Activated CD8-positive, alpha-beta T cell treated with anti-CD3 and anti-CD28 coated beads, Interleukin-2, amount 10 ng/mL, durations not matched to agents 7 days and 5 days (primary cell): ENCODE measurements at regions of chr11 and their contacts with region 1.

Region 1: GRCh38 chr11:118907051-118908042 is 18.4 kb downstream of the BCL9L start:
- DNase-seq: peak; percentile 91
- ATAC-seq: peak; percentile 74
- H3K4me3 Mint-ChIP-seq: no peak overlapping the region
- H3K27ac Mint-ChIP-seq: peak overlapping the region; percentile 42
- H3K4me1 Mint-ChIP-seq: peaks cover 47% of the 10 kb centered on the region
- H3K27me3 Mint-ChIP-seq: no peaks in the 10 kb centered on the region

Region 2: GRCh38 chr11:118917481-118918127 is 10.3 kb after region 1 on chr11:
- CTCF ChIA-PET with region 1: interaction called, 3 read pairs
- POLR2A ChIA-PET with region 1: interaction called, 104 read pairs
- DNase-seq: peak; percentile 70
- ATAC-seq: peak; percentile 17
- H3K4me3 Mint-ChIP-seq: peak overlapping the region; percentile 80
- H3K27ac Mint-ChIP-seq: peak overlapping the region; percentile 96
- H3K4me1 Mint-ChIP-seq: peaks cover 88% of the 10 kb centered on the region
- H3K27me3 Mint-ChIP-seq: no peaks in the 10 kb centered on the region

Region 3: DNA sequence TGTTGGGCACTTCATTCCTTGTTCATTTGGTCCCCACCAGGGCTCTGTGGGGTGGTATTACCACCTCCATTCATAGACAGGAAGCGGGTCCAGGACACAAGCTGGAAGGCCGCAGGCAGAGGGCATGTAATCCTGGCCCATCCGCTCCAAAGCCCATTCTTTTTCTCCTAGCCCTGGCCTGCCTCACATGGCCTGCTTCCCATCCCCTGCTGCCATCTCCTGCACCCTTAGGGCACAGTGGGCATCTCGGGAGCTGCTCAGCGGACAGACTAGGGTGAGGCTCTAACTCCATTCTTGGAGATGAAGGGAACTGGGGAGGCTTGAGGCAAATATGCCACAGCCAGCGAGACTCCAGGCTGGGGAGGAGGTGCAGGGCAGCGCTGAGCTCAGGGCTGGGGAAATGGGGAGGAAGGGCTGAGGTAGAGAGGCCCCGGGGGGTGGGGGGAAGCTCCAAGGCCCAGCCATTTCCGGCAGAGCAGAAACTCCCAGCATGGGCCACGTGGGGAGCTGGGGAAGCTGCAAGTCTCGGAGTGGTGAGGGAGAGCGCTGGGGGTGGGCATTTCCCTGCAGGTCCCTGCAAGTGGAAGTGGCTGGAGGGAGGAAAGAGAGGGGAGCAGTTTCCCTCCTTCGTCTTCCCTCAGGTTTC is 32.7 kb after region 1 on chr11:
- CTCF ChIA-PET with region 1: interaction called, 10 read pairs
- POLR2A ChIA-PET with region 1: interaction called, 4 read pairs
- DNase-seq: peak; percentile 76
- ATAC-seq: peak; percentile 90
- H3K4me3 Mint-ChIP-seq: peak overlapping the region; percentile 29
- H3K27ac Mint-ChIP-seq: peak overlapping the region; percentile 82
- H3K4me1 Mint-ChIP-seq: peaks cover 37% of the 10 kb centered on the region
- H3K27me3 Mint-ChIP-seq: no peaks in the 10 kb centered on the region